PC-9 (cell line): ENCODE measurements at regions of chr7 and their contacts with region 1.

Region 1: GRCh38 chr7:45923290-45923689 is 2.2 kb upstream of the IGFBP3 start:
- DNase-seq: peak; percentile 93 to 94
- H3K4me3 ChIP-seq: no peak overlapping the region
- H3K27ac ChIP-seq: peak overlapping the region; percentile 52
- H3K4me1 ChIP-seq: peaks cover 41% of the 10 kb centered on the region
- H3K27me3 ChIP-seq: no peaks in the 10 kb centered on the region
- CTCF ChIP-seq: peak; percentile 99

Region 2: DNA sequence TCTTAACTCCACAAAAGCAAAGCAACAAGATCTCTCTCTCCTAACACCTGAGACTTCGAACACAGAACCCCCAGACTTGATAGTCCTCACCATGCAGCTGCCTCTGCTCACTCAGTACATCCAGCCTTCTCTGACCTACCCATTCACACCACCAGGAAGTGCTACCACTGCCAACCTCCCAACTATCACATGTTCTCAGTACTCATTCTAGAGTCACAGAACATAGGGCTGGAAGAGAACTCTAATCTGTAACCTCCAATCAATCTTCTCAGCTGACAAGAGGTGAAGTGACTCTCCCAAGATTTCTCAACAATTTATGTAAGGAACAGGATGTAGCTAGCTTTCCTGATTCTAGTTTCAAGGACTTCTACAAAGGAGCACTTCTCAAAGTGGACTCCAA is 1436.6 kb before region 1 on chr7:
- CTCF ChIA-PET with region 1: no interaction called
- POLR2A ChIA-PET with region 1: no interaction called
- intact Hi-C with region 1: no loop called
- DNase-seq: peak in 1 of 2 experiments; percentile 50
- H3K4me3 ChIP-seq: no peak overlapping the region
- H3K27ac ChIP-seq: no peak overlapping the region
- H3K4me1 ChIP-seq: peaks cover 27% of the 10 kb centered on the region
- H3K27me3 ChIP-seq: no peaks in the 10 kb centered on the region
- CTCF ChIP-seq: no peak

Region 3: GRCh38 chr7:45384499-45384898 is 538.8 kb before region 1 on chr7:
- CTCF ChIA-PET with region 1: no interaction called
- POLR2A ChIA-PET with region 1: no interaction called
- intact Hi-C with region 1: no loop called
- DNase-seq: no peak
- H3K4me3 ChIP-seq: no peak overlapping the region
- H3K27ac ChIP-seq: no peak overlapping the region
- H3K4me1 ChIP-seq: no peaks in the 10 kb centered on the region
- H3K27me3 ChIP-seq: peaks cover 20% of the 10 kb centered on the region
- CTCF ChIP-seq: no peak

Region 4: DNA sequence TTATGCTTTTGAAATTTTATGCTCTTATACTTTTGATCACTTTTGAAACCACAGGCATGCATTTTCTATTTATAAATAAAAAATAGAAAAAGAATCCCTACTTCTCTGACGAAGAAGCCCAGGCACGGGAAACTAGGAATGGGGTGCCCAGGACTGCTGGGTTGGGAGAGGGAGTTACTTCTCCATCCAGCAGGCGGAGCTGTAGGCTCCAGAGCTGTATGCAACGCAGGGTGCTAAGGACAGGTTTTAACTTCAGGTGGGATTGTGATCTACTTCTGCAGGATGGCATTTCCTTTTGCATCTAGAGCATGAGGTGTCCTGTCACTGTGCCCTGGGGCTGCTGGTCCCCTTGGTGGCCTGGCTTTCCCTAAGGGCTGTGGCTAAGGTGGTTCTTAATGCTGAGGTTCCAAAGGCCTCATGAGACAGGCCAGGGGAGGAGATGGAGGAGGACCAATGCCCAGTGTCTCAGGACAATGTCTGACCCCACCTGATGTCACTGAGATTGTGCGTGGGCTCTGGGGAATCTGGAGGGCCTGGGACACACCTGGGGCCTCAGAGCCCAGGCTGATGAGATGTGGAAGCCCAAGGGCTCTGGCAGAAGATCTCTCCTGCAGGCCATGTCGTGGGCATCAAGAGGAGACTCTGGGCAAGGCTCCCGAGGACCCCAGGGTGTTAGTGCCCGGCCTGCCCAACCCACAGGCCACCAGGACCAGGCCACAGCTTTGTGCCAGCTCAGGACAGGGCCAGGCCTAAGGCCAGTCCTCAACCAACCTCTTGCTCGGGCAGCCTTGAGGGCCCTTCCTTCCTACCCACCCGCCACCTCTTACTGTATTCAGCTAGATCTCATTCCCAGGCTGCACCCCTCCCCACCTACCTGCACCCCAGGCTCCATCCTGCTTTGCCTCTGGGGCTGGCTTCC is 50.9 kb before region 1 on chr7:
- CTCF ChIA-PET with region 1: interaction called, 3 read pairs
- POLR2A ChIA-PET with region 1: no interaction called
- intact Hi-C with region 1: loop called (anchors 2 kb)
- DNase-seq: peak; percentile 35 to 49
- H3K4me3 ChIP-seq: no peak overlapping the region
- H3K27ac ChIP-seq: no peak overlapping the region
- H3K4me1 ChIP-seq: peaks cover 37% of the 10 kb centered on the region
- H3K27me3 ChIP-seq: no peaks in the 10 kb centered on the region
- CTCF ChIP-seq: peak; percentile 76

Region 5: DNA sequence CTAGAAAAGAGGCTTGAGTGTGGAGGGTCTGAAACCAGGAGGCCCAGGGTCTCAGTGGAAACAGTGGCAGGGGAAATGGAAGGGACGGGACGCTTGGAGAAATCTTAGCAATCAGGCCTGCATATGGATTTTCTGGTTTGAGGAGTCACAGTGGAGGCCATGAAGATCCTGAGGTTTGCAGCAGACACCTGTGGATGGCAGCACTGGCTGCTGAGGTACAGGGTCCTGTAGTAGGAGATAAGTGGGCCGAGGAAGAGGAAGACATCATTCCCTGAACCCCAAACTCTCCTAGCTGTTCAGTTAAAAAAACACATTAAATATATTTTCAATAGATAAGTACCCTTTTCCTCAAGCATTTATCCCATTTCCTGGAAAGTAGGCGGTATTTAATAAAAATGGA is 206.5 kb after region 1 on chr7:
- CTCF ChIA-PET with region 1: no interaction called
- POLR2A ChIA-PET with region 1: no interaction called
- intact Hi-C with region 1: loop called (anchors 1 kb)
- DNase-seq: no peak
- H3K4me3 ChIP-seq: no peak overlapping the region
- H3K27ac ChIP-seq: no peak overlapping the region
- H3K4me1 ChIP-seq: peaks cover 30% of the 10 kb centered on the region
- H3K27me3 ChIP-seq: no peaks in the 10 kb centered on the region
- CTCF ChIP-seq: no peak

Region 6: GRCh38 chr7:46206474-46207060 is 283.3 kb after region 1 on chr7:
- CTCF ChIA-PET with region 1: interaction called, 4 read pairs
- POLR2A ChIA-PET with region 1: interaction called, 4 read pairs
- intact Hi-C with region 1: loop called (anchors 1 kb)
- DNase-seq: peak; percentile 48 to 52
- H3K4me3 ChIP-seq: no peak overlapping the region
- H3K27ac ChIP-seq: peak overlapping the region; percentile 63; the same call in 1 of the 2 replicates
- H3K4me1 ChIP-seq: peaks cover 25% of the 10 kb centered on the region
- H3K27me3 ChIP-seq: no peaks in the 10 kb centered on the region
- CTCF ChIP-seq: no peak

Region 7: DNA sequence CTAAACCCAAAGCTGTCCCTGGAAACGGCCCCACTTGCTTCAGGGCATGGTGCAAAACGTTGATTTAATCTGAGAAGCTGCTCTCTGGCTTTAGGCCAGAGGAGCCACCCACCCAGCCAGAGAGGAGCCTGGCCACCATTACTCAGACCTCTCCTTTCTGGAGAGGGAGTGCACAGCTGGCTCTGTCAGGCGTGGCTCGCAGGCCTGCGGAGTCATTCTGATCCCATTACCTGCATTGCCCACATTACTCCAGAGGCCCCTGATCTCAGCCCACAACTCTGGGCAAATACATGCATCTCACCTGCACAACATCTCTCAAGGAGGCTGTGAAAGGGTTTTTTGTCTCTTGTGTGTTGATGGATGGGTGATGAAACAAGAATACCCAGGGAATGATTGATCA is 367.8 kb after region 1 on chr7:
- CTCF ChIA-PET with region 1: no interaction called
- POLR2A ChIA-PET with region 1: interaction called, 3 read pairs
- intact Hi-C with region 1: loop called (anchors 2 kb)
- DNase-seq: peak; percentile 72 to 83
- H3K4me3 ChIP-seq: no peak overlapping the region
- H3K27ac ChIP-seq: peak overlapping the region; percentile 77
- H3K4me1 ChIP-seq: peaks cover 30% of the 10 kb centered on the region
- H3K27me3 ChIP-seq: no peaks in the 10 kb centered on the region
- CTCF ChIP-seq: no peak

Region 8: GRCh38 chr7:46651073-46651472 is 727.8 kb after region 1 on chr7:
- CTCF ChIA-PET with region 1: no interaction called
- POLR2A ChIA-PET with region 1: no interaction called
- intact Hi-C with region 1: loop called (anchors 1 kb)
- DNase-seq: peak; percentile 79 to 97
- H3K4me3 ChIP-seq: no peak overlapping the region
- H3K27ac ChIP-seq: peak overlapping the region; percentile 96
- H3K4me1 ChIP-seq: peaks cover 35% of the 10 kb centered on the region
- H3K27me3 ChIP-seq: no peaks in the 10 kb centered on the region
- CTCF ChIP-seq: no peak

Region 9: DNA sequence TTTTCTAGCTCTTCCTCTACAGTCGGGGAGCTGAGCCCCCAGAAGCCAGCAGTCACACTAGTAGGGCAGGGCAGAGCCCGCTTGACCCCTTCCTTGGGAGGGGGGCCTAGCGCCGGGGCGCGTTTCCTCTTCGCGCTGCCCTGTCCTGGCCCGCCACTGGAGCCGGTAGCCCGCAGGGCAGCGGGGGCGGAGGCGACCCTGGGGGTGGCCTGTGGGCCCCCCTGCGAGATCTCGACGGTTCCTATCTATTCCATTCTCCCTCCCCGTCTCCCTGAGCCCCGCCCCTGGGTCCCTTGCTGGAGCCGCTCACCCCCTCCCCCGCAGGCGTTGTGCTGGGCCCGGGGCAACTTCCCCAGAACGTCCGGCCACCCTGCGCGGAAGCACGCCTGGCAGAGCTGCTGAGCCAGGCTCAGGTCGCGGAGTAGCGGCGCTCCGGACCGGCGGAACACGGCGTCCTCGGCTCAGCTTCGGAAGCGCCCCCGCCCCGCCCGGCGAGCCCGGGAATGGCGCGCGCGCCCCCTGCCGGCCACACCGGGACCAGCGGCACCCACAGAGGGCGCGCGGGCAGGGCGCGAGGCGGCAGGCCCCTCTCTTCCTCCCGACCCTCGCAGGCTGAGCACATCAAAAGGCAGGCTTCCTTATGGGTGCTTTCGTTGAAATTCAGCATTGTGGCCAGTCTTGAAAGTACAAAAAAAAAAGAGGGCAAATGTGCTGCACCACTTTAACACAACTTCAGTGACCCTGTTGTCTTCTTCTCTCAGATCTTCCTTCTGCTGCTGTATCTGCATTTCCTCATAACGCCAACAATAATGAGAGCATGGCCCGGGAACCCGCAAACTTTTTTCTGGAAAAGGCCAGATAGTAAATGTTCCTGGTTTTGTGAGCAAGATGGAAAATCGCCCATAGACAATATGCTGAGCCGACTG is 1331.1 kb after region 1 on chr7:
- CTCF ChIA-PET with region 1: interaction called, 4 read pairs
- POLR2A ChIA-PET with region 1: no interaction called
- intact Hi-C with region 1: loop called (anchors 1 kb)
- DNase-seq: peak; percentile 52 to 79
- H3K4me3 ChIP-seq: peak overlapping the region; percentile 63
- H3K27ac ChIP-seq: no peak overlapping the region
- H3K4me1 ChIP-seq: peaks cover 19% of the 10 kb centered on the region
- H3K27me3 ChIP-seq: no peaks in the 10 kb centered on the region
- CTCF ChIP-seq: peak; percentile 89